ENCODE measurements at regions of chr17 and their contacts with region 1.

Region 1: GRCh38 chr17:33014366-33015150 is 22.9 kb downstream of the SPACA3 start:
- DNase-seq: no peak
- ATAC-seq: no peak
- H3K4me3 ChIP-seq: no peak overlapping the region
- H3K4me3 Mint-ChIP-seq: no peak overlapping the region
- H3K27ac ChIP-seq: no peak overlapping the region
- H3K27ac Mint-ChIP-seq: no peak overlapping the region
- H3K4me1 ChIP-seq: no peaks in the 10 kb centered on the region
- H3K4me1 Mint-ChIP-seq: no peaks in the 10 kb centered on the region
- H3K27me3 ChIP-seq: peaks cover 0 to 4% of the 10 kb centered on the region in 2 experiments
- H3K27me3 Mint-ChIP-seq: peaks cover 9% of the 10 kb centered on the region
- CTCF ChIP-seq: no peak

Region 2: GRCh38 chr17:32835291-32835761 is 179.2 kb before region 1 on chr17:
- CTCF ChIA-PET with region 1: no interaction called
- POLR2A ChIA-PET with region 1: no interaction called
- intact Hi-C with region 1: no loop called
- DNase-seq: no peak
- ATAC-seq: no peak
- H3K4me3 ChIP-seq: no peak overlapping the region
- H3K4me3 Mint-ChIP-seq: no peak overlapping the region
- H3K27ac ChIP-seq: no peak overlapping the region
- H3K27ac Mint-ChIP-seq: no peak overlapping the region
- H3K4me1 ChIP-seq: no peaks in the 10 kb centered on the region
- H3K4me1 Mint-ChIP-seq: no peaks in the 10 kb centered on the region
- H3K27me3 ChIP-seq: no peaks in the 10 kb centered on the region
- H3K27me3 Mint-ChIP-seq: peaks cover 2% of the 10 kb centered on the region
- CTCF ChIP-seq: no peak

Region 3: DNA sequence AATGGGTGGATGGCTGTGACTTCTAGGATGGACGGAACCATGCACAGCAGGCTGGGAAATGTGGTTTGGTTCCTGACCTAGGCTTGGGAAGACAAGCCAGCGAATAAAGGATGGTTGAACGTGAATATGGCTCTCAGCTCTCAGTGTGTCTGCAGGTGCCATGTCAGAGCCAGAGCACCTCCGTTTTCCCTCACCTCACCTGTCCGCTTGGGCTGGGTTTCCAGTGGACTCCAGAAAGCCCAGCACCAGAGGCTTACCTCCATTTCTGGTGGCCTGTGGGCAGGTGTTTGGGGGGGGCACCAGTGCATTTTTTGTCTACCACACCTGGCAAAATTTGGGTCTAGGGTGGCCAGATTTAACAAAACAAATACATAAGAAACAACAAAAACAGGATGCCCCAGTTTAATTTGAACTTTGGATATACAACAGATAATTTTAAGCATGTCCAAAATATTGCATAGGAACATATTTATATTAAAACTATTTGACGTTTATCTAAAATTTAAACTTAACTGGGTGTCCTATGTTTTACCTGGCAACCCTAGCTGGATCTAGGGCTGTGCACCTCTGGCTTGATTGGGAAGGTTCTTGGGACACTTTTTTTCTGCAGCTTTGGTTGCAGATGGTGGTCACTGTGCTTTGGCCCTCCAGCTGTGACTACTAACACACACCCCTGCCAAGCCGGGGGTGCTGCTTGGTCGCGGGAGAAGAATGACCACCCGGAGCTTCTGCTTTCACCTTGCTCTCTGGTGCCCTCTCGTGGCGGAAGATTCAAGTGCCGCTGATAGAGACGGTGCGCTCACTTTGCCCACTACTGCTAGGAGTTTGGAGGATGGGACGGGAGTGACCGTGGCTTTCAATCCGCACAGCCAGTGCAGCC is 16.6 kb before region 1 on chr17:
- CTCF ChIA-PET with region 1: interaction called, 10 read pairs
- POLR2A ChIA-PET with region 1: no interaction called
- intact Hi-C with region 1: no loop called
- DNase-seq: peak; percentile 56 to 81 (median 69)
- ATAC-seq: peak; percentile 59
- H3K4me3 ChIP-seq: no peak overlapping the region
- H3K4me3 Mint-ChIP-seq: no peak overlapping the region
- H3K27ac ChIP-seq: no peak overlapping the region
- H3K27ac Mint-ChIP-seq: no peak overlapping the region
- H3K4me1 ChIP-seq: peaks cover 8% of the 10 kb centered on the region
- H3K4me1 Mint-ChIP-seq: peaks cover 4% of the 10 kb centered on the region
- H3K27me3 ChIP-seq: peaks cover 0 to 2% of the 10 kb centered on the region in 2 experiments
- H3K27me3 Mint-ChIP-seq: peaks cover 24% of the 10 kb centered on the region
- CTCF ChIP-seq: peak; percentile 83